ENCODE measurements at regions of chr20 and their contacts with region 1.

Region 1: DNA sequence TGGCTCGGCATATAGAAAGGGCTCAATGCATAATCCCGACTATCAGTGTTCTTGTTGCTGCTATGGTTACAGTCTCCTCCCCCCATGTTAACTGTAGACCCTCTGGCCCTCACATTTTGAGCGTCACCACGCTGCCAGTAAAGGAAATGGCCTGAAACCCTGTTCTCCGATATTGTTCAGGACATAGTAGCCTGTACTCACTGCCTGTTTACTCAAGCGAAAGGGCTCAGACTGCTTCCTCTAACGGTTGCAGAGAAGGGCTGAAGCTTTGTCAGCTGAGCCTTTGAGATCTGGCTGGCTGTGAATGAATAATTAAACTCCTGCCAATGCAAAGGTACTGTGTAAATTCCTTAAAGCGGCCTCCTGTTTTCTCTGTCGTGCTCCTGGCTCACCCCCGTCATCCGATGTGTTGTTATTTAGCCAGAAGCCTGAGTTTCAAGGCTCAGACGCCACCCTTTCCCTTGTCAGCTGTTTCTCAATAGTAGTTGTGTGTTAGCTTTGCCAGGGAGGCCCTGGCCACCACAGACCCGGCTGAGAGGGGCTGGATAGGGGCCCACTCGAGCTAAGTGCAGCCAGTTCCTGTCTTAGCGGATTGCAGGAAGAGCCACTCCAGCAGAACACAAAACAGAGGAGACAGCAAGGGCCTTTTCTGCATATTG is 31.2 kb upstream of the RALGAPA2 start:
- H3K4me3 Mint-ChIP-seq: peak overlapping the region; percentile 65
- H3K27ac Mint-ChIP-seq: peak overlapping the region; percentile 77
- H3K4me1 Mint-ChIP-seq: peaks cover 29% of the 10 kb centered on the region
- H3K27me3 Mint-ChIP-seq: no peaks in the 10 kb centered on the region

Region 2: DNA sequence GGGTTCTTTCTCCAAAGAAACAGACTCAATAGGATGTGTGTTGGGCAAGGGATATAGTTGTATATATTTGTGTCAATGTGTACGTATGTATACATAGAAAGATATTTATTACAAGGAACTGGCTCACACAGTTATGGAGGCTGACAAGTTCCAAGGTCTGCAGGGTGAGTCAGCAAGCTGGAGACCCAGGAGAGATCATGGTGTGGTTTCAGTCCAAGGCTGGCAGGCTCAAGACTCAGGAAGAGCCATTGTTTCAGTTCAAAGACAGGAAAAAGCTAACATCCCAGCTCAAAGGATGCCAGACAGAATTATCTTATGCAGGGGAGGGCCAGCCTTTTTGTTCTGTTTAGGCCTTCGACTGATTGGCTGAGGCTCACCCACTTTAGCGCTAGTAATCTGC is 58.7 kb after region 1 on chr20:
- intact Hi-C with region 1: loop called (anchors 10 kb)
- H3K4me3 Mint-ChIP-seq: no peak overlapping the region
- H3K27ac Mint-ChIP-seq: no peak overlapping the region
- H3K4me1 Mint-ChIP-seq: peaks cover 10% of the 10 kb centered on the region
- H3K27me3 Mint-ChIP-seq: peaks cover 3% of the 10 kb centered on the region

Measured in dendritic cell treated with granulocyte-macrophage colony-stimulating factor and Interleukin-4, amounts not matched to agents 40 ng/mL and 50 ng/mL, for 4 days (primary cell).